ENCODE measurements at regions of chr4 and their contacts with region 1.

Region 1: GRCh38 chr4:8440492-8441341 is at the starts of genes ACOX3 and TRMT44:
- DNase-seq: peak; percentile 92
- H3K4me3 Mint-ChIP-seq: peak within 1 kb of the TSS; percentile 98
- H3K27ac Mint-ChIP-seq: peak within 1 kb of the TSS; percentile 100
- H3K4me1 Mint-ChIP-seq: peaks cover 64% of the 10 kb centered on the region
- H3K27me3 Mint-ChIP-seq: no peaks in the 10 kb centered on the region
- CTCF ChIP-seq: no peak
- total RNA-seq, gene ACOX3: 17.9 TPM in 2 replicates
- total RNA-seq, gene TRMT44: 23.2 and 24.4 TPM in 2 replicates

Region 2: DNA sequence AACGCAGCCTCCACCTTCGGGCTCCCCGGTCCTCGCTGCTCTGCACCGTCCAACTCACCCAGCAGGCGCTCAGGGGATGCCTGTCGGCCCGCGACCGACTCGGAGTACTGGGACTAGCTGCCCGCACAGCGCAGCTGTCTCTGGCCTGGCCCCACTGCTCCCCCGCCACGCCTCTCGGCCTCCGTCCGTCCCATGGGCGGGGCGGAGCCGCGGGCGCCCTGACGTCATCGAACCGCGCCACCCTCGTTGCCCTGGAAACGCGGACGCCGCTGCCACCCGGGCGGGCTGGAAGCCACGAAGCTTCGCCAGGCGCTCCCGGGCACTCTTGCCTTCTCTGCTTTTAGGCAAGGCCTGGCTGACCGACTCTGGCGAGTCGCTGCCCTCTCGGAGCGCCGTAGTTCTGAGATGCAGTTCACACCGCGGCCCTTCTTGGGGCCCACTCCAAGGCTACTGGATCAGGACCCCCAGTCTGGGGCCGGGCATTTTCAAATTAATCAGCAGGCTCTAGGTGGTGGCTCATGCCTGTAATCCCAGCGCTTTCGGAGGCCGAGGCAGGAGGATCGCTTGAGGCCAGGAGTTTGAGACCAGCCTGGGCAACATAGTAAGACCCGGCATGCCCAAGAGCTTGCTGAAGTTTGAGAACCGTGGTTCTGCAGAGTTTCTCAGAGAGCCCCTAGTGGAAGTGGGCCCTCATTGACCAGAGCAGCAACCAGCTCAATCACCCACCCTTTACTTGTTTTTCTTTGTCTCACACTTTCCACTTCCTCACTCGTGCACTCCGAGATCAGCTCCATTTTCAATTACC is 12.2 kb before region 1 on chr4:
- CTCF ChIA-PET with region 1: interaction called, 5 read pairs
- POLR2A ChIA-PET with region 1: interaction called, 105 read pairs
- intact Hi-C with region 1: no loop called
- DNase-seq: peak; percentile 83
- H3K4me3 Mint-ChIP-seq: peak overlapping the region; percentile 98
- H3K27ac Mint-ChIP-seq: peak overlapping the region; percentile 97
- H3K4me1 Mint-ChIP-seq: peaks cover 23% of the 10 kb centered on the region
- H3K27me3 Mint-ChIP-seq: no peaks in the 10 kb centered on the region
- CTCF ChIP-seq: peak; percentile 37

Measured in MCF 10A (cell line).